ENCODE measurements at regions of chr2 and their contacts with region 1.

Region 1: DNA sequence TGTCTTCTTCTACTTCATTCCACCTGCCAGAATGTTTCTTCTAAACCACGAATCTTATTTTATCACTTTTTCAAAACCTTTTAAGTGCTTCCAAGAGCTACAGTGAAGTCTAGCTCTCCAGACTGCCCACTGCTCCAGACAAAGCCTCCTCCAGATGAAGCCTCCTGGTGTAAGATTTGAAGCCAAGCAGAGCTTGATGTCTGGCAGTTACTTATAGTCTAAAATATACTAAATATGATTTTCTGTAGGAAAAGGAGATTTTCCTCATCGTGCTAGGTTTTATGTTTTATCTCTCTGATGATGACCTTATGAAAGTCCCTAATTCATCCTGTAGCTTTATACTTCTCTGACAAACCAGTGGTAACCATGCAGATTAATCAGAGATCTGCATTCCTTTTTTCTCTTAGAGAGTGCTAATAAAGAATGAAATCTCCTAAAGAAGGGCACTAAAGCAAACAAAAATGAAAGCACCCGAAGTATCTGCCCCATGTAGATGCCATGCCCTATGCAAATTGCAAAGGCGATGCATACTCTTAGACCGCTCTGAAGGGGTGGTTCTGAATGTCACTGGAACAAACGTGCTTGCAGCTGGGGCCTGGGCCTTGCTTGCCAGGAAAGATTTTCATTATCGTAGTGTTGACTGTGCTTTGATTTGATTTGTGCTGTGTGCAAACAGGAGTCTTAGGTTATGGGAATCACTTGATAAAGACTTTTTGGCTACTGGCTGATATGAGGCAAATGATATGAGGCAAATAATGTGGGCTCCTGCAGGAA is 314.2 kb downstream of the PID1 start:
- DNase-seq: no peak
- H3K4me3 ChIP-seq: no peak overlapping the region
- CTCF ChIP-seq: no peak
- POLR2A ChIP-seq: no peak

Region 2: DNA sequence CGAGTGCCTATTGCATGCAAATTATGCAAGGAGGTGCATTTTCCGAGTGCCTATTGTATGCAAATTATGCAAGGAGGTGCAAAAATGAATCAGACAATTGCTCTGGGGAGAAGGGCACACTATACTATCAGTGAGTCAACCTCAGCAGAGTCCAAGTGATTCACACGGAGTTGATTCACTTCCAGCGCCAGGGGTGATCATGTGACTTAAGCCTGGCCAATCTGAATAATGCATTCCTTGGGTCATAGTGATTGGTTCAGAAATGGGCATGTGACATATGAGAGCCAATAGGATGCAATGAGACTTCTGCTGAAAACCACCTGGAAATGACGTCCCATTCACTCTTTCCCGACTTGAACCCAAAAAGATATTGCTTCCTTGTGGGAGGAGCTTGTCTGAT is 933.3 kb before region 1 on chr2:
- intact Hi-C with region 1: loop called (anchors 10 kb)
- DNase-seq: no peak
- H3K4me3 ChIP-seq: no peak overlapping the region
- CTCF ChIP-seq: no peak
- POLR2A ChIP-seq: no peak

Region 3: DNA sequence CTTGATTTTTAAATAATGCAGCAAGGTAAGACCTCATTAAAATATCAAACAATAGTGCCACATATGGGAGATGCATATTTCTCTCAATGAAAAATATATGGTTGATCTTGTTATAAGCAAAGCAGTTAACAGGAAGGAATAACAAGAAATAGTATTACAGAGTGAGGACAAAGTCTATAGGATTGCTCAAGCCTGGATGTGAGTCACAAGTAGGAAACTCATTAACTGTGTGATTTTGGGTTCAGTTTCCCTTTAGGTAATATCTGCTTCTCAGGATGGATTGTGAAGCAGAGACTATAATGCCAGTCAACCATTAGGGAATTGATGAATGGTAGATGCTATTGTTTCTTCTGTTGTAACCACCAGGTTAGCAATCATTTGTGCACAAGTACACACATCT is 732.5 kb before region 1 on chr2:
- intact Hi-C with region 1: no loop called
- DNase-seq: no peak
- H3K4me3 ChIP-seq: no peak overlapping the region
- CTCF ChIP-seq: no peak
- POLR2A ChIP-seq: no peak

Region 4: DNA sequence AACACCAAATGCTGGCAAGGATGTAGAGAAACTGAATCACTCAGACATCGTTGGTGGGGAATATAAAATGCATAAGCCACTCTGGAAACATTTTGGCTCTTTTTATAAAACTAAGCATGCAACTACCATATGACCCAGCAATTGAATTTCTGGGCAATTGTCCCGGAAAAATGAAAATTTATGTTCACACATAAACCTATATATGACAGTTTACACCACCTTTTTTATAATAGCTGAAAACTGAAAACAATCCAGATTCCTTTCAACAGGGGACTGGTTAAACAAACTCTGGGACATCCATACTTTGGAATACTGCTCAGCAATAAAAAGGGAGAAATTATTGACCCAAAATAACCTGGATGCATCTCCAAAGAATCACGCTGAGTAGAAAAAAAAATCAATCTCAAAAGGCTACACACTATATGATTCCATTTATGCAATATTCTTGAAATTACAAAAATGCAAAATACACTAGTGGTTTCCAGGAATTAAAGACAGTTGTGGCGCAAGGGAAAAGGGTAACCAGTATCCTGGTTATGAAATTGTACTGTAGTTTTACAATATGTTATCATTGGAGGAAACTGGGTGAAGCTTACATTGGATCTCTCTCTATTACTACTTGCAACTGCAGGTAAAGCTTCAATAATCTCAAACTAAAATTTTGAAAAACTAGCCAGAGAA is 444.4 kb after region 1 on chr2:
- intact Hi-C with region 1: no loop called
- DNase-seq: no peak
- H3K4me3 ChIP-seq: no peak overlapping the region
- CTCF ChIP-seq: no peak
- POLR2A ChIP-seq: no peak

Region 5: GRCh38 chr2:230234845-230235244 is 1278.0 kb after region 1 on chr2:
- intact Hi-C with region 1: no loop called
- DNase-seq: no peak
- H3K4me3 ChIP-seq: no peak overlapping the region
- CTCF ChIP-seq: no peak
- POLR2A ChIP-seq: no peak

Measured in lower leg skin (tissue), 4 donors.